ENCODE measurements at regions of chrX and their contacts with region 1.

Region 1: GRCh38 chrX:78957768-78958130 is 12.6 kb downstream of the P2RY10 start:
- DNase-seq: no peak
- ATAC-seq: no peak
- H3K4me3 Mint-ChIP-seq: peak overlapping the region in 9 of 10 donors; percentile 3 to 53 (median 15)
- H3K27ac Mint-ChIP-seq: peak overlapping the region; percentile 32 to 89 (median 86)
- H3K4me1 Mint-ChIP-seq: peaks cover 25 to 81% (median 58%) of the 10 kb centered on the region in 4 donors
- H3K27me3 Mint-ChIP-seq: no peaks in the 10 kb centered on the region

Region 2: DNA sequence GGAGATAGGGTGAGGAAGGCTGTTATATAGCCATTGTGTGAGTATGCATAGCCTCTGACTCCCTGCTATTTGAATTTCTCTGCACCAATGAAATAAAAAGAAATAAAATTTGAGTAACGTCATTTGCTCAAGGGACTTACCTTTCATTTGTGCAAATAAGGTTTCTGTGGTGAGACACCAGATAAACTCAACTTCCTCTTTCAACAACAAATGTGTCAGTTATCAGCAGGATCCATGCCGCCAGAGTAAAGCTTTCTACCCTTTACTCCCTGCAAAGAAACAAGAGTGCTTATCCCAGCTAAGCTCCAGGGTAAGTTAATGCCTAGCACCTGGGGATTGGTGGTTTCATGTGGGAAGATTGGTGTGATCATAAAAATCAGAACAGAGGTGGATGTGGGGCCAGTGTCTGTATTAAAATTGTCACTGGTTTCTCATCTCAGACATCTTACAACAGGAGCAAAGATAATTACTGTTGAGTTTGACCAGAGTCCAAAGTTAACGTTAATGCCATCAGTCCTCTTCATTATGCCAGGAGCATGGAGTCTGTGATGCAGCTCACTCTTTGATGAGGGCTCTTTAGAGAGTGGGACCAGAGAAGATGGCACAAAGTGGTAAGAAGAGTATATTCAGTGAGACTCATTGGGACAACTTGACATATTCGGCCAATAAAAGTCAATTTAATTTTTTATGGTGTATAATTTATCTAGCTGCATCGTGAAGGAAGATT is 12.4 kb before region 1 on chrX and contains the start of gene P2RY10:
- POLR2A ChIA-PET with region 1: interaction called, 13 read pairs
- DNase-seq: peak in 9 of 10 donors; percentile 18 to 79 (median 55)
- ATAC-seq: peak; percentile 90 to 91
- H3K4me3 Mint-ChIP-seq: peak within 1 kb of the TSS; percentile 93 to 99 (median 96)
- H3K27ac Mint-ChIP-seq: peak within 1 kb of the TSS; percentile 93 to 99 (median 99)
- H3K4me1 Mint-ChIP-seq: peaks cover 21 to 62% (median 54%) of the 10 kb centered on the region in 4 donors
- H3K27me3 Mint-ChIP-seq: no peaks in the 10 kb centered on the region
- polyA plus RNA-seq, gene P2RY10: 34.4 to 46.5 (median 37.5) TPM